ENCODE measurements at regions of chr3 and their contacts with region 1.

Region 1: DNA sequence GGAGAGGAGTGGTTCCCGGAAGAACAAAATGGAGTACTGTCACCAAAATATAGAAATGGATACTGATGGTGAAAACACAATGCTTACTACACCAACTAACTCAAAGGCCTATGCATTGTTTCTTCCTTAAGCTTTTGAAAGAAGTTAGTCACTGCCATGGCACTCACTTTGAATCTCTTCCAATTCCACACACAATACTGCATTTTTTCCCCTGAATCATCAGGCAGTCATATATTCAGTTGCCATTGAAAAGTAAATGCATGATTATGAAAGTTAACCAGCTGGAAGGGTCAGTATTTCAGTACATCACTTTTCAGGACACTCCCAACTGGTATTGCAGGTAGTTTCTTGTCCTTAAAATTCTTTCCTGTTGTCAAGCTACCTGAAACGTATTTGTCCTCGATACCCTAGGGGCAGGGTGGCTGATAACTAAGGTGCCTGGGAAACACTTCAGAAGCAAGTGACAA is 9.0 kb upstream of the LRRFIP2 start:
- DNase-seq: peak; percentile 94
- H3K4me3 Mint-ChIP-seq: peak overlapping the region; percentile 56
- H3K27ac Mint-ChIP-seq: peak overlapping the region; percentile 68
- H3K4me1 Mint-ChIP-seq: peaks cover 31% of the 10 kb centered on the region
- H3K27me3 Mint-ChIP-seq: no peaks in the 10 kb centered on the region
- CTCF ChIP-seq: no peak

Region 2: DNA sequence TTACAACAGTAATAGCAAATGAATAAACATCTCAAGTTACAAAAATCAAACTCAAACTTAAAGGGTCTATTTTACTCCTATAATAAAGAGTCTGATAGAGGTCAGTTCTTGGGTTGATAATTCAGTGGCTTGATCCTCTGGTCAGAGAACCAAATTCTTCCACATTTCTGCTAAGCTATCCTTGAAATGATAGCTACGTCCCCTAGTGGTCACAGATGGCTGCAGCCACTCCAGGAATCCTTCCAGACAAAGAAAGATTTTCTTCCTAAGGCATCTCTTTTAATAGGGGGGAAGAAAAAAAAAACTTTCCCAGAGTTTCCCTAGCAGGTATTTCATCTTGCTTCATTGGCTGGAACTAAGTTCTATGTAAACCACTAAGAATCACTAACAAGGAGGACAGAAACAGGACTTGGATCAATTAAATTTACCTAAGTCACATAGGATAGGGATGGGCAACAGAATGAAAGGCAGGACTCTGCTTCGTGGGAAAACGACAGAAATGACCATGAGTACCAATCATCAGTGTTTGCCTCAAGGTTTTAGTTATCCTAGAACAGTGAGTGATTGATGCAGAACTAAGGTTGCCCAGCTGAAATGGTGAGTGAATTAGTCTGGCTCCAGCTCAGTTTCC is 642.4 kb before region 1 on chr3:
- CTCF ChIA-PET with region 1: no interaction called
- POLR2A ChIA-PET with region 1: no interaction called
- intact Hi-C with region 1: no loop called
- DNase-seq: peak; percentile 50
- H3K4me3 Mint-ChIP-seq: no peak overlapping the region
- H3K27ac Mint-ChIP-seq: no peak overlapping the region
- H3K4me1 Mint-ChIP-seq: no peaks in the 10 kb centered on the region
- H3K27me3 Mint-ChIP-seq: no peaks in the 10 kb centered on the region
- CTCF ChIP-seq: peak; percentile 91

Region 3: GRCh38 chr3:36792342-36792741 is 391.1 kb before region 1 on chr3:
- CTCF ChIA-PET with region 1: no interaction called
- POLR2A ChIA-PET with region 1: no interaction called
- intact Hi-C with region 1: no loop called
- DNase-seq: peak; percentile 51
- H3K4me3 Mint-ChIP-seq: no peak overlapping the region
- H3K27ac Mint-ChIP-seq: no peak overlapping the region
- H3K4me1 Mint-ChIP-seq: no peaks in the 10 kb centered on the region
- H3K27me3 Mint-ChIP-seq: peaks cover 26% of the 10 kb centered on the region
- CTCF ChIP-seq: peak; percentile 53

Region 4: GRCh38 chr3:37163262-37164015 is 20.0 kb before region 1 on chr3:
- CTCF ChIA-PET with region 1: no interaction called
- POLR2A ChIA-PET with region 1: no interaction called
- intact Hi-C with region 1: no loop called
- DNase-seq: no peak
- H3K4me3 Mint-ChIP-seq: no peak overlapping the region
- H3K27ac Mint-ChIP-seq: peak overlapping the region; percentile 50
- H3K4me1 Mint-ChIP-seq: peaks cover 25% of the 10 kb centered on the region
- H3K27me3 Mint-ChIP-seq: no peaks in the 10 kb centered on the region
- CTCF ChIP-seq: no peak

Region 5: GRCh38 chr3:37216597-37217097 is 33.2 kb after region 1 on chr3:
- CTCF ChIA-PET with region 1: interaction called, 9 read pairs
- POLR2A ChIA-PET with region 1: interaction called, 11 read pairs
- intact Hi-C with region 1: no loop called
- DNase-seq: no peak
- H3K4me3 Mint-ChIP-seq: no peak overlapping the region
- H3K27ac Mint-ChIP-seq: no peak overlapping the region
- H3K4me1 Mint-ChIP-seq: peaks cover 10% of the 10 kb centered on the region
- H3K27me3 Mint-ChIP-seq: no peaks in the 10 kb centered on the region
- CTCF ChIP-seq: no peak

Region 6: DNA sequence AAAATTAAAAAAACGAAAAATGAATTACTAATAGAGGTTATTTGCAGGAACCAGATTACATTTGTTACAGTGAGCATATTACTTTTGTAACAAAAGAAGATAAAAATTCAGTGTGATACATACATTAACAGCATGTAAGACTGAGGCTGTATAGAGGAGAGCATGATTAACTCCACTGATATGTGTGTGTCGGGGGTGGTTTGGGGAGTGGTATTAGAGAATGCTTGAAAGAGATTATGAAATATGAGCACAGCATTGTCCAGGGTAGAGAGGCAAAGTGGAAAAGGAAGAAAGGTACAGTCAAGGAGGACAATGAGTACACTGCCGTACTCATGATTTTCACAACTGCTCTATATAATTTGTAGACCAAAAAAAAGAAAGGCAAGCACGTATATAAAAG is 53.8 kb after region 1 on chr3:
- CTCF ChIA-PET with region 1: interaction called, 10 read pairs
- POLR2A ChIA-PET with region 1: no interaction called
- intact Hi-C with region 1: no loop called
- DNase-seq: peak; percentile 43
- H3K4me3 Mint-ChIP-seq: no peak overlapping the region
- H3K27ac Mint-ChIP-seq: peak overlapping the region; percentile 68
- H3K4me1 Mint-ChIP-seq: peaks cover 19% of the 10 kb centered on the region
- H3K27me3 Mint-ChIP-seq: no peaks in the 10 kb centered on the region
- CTCF ChIP-seq: no peak